IMR-90 (cell line): ENCODE measurements at regions of chr12 and their contacts with region 1.

Region 1: DNA sequence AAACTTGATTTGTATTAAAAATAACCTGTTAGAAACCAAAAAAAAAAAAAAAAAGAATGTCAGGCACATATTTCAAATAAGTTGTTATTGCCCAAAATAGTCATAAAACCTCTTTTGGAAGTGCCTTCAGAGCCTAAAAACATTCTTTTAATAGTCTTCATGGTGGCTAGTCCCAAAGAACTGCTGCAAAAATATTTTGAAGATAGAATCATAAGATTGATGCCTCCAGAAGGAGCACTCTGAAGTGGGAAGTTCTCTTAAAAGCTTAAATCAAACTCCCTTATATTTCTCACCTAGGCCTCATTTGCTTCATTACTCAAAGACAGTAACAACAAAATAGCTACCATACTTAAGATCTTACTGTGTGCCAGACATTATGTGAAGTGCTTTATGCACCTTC is 27.2 kb upstream of the NT5DC3 start:
- DNase-seq: no peak
- ATAC-seq: no peak
- H3K4me3 ChIP-seq: no peak overlapping the region
- H3K27ac ChIP-seq: no peak overlapping the region
- H3K4me1 ChIP-seq: no peaks in the 10 kb centered on the region
- H3K27me3 ChIP-seq: no peaks in the 10 kb centered on the region
- CTCF ChIP-seq: no peak
- POLR2A ChIP-seq: no peak
- RAD21 ChIP-seq: no peak

Region 2: GRCh38 chr12:103571286-103571685 is 296.9 kb before region 1 on chr12:
- CTCF ChIA-PET with region 1: no interaction called
- POLR2A ChIA-PET with region 1: no interaction called
- dilution Hi-C with region 1: no loop called
- in situ Hi-C with region 1: loop called (anchors 10 kb)
- intact Hi-C with region 1: loop called (anchors 1 kb)
- DNase-seq: no peak
- ATAC-seq: peak; percentile 46
- H3K4me3 ChIP-seq: no peak overlapping the region
- H3K27ac ChIP-seq: no peak overlapping the region
- H3K4me1 ChIP-seq: no peaks in the 10 kb centered on the region
- H3K27me3 ChIP-seq: peaks cover 8% of the 10 kb centered on the region
- CTCF ChIP-seq: no peak
- POLR2A ChIP-seq: no peak
- RAD21 ChIP-seq: no peak

Region 3: DNA sequence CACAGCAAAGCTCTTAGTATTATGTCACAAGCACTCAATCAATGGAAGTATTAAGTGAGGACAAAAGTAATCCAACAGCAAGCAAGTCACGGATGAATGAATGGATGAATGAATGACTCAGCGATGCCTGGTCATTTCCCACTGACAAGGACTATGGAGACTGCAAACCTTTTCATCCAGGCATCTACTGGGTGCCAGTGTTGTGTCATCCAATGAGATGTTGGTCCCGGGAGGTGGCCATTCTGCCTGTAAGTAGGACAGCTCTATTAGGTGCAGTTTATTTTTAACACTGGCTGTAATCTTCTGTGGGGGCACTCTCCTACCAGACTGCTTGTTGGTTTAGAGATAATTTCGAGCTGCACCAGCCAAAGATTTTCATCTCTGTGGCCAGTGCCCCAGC is 241.7 kb before region 1 on chr12:
- CTCF ChIA-PET with region 1: no interaction called
- POLR2A ChIA-PET with region 1: no interaction called
- dilution Hi-C with region 1: no loop called
- in situ Hi-C with region 1: no loop called
- intact Hi-C with region 1: loop called (anchors 2 kb)
- DNase-seq: peak; percentile 51
- ATAC-seq: peak; percentile 76
- H3K4me3 ChIP-seq: no peak overlapping the region
- H3K27ac ChIP-seq: no peak overlapping the region
- H3K4me1 ChIP-seq: no peaks in the 10 kb centered on the region
- H3K27me3 ChIP-seq: no peaks in the 10 kb centered on the region
- CTCF ChIP-seq: peak; percentile 39; the same call in 1 of the 2 replicates
- POLR2A ChIP-seq: no peak
- RAD21 ChIP-seq: peak; percentile 54

Region 4: GRCh38 chr12:103657331-103657730 is 210.9 kb before region 1 on chr12:
- CTCF ChIA-PET with region 1: no interaction called
- POLR2A ChIA-PET with region 1: no interaction called
- dilution Hi-C with region 1: no loop called
- in situ Hi-C with region 1: no loop called
- intact Hi-C with region 1: no loop called
- DNase-seq: peak; percentile 23
- ATAC-seq: peak; percentile 24; the same call in 1 of the 2 replicates
- H3K4me3 ChIP-seq: no peak overlapping the region
- H3K27ac ChIP-seq: no peak overlapping the region
- H3K4me1 ChIP-seq: no peaks in the 10 kb centered on the region
- H3K27me3 ChIP-seq: peaks cover 2% of the 10 kb centered on the region; the same call in 1 of the 2 replicates
- CTCF ChIP-seq: no peak
- POLR2A ChIP-seq: no peak
- RAD21 ChIP-seq: no peak

Region 5: DNA sequence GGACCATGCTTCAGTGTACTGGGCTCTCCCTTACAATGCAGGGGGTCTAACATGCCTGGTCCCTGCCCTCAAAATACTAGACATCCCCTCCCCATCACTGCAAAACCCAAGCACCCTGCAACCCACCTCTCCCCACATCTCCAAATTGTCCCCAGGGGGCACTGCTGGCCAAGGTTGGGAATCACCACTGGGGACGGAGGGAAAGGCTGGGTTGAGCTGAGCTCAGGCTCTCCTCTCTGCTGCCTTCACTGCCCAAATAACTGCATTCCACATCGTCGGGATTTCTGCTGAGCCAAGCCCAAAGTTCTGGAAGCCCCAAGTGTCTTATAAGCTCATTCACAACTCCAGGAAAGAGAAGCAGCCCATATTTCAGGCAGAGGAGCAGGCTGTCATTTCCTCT is 96.7 kb before region 1 on chr12:
- CTCF ChIA-PET with region 1: interaction called, 24 read pairs
- POLR2A ChIA-PET with region 1: no interaction called
- dilution Hi-C with region 1: no loop called
- in situ Hi-C with region 1: loop called (anchors 5 kb)
- intact Hi-C with region 1: loop called (anchors 1 kb)
- DNase-seq: peak; percentile 44
- ATAC-seq: peak; percentile 97
- H3K4me3 ChIP-seq: no peak overlapping the region
- H3K27ac ChIP-seq: no peak overlapping the region
- H3K4me1 ChIP-seq: no peaks in the 10 kb centered on the region; the same call in 1 of the 2 replicates
- H3K27me3 ChIP-seq: no peaks in the 10 kb centered on the region
- CTCF ChIP-seq: peak; percentile 72
- POLR2A ChIP-seq: no peak
- RAD21 ChIP-seq: peak; percentile 86

Region 6: GRCh38 chr12:103840876-103841689 is 27.1 kb before region 1 on chr12 and contains the start of gene NT5DC3:
- CTCF ChIA-PET with region 1: no interaction called
- POLR2A ChIA-PET with region 1: no interaction called
- dilution Hi-C with region 1: no loop called
- in situ Hi-C with region 1: no loop called
- intact Hi-C with region 1: no loop called
- DNase-seq: peak; percentile 74
- ATAC-seq: peak; percentile 95
- H3K4me3 ChIP-seq: peak within 1 kb of the TSS; percentile 95
- H3K27ac ChIP-seq: peak within 1 kb of the TSS; percentile 51
- H3K4me1 ChIP-seq: peaks cover 9% of the 10 kb centered on the region
- H3K27me3 ChIP-seq: no peaks in the 10 kb centered on the region
- CTCF ChIP-seq: no peak
- POLR2A ChIP-seq: peak; percentile 82
- RAD21 ChIP-seq: no peak
- total RNA-seq, gene NT5DC3: 17.6 and 23.1 TPM in 2 replicates